Activated T-helper 1 cell treated with anti-CD3 and anti-CD28 coated beads, Interleukin-12 subunit alpha, Interleukin-12 subunit beta, Interleukin-2, Interleukin-4 antibody, amounts not matched to agents 30 ng/mL and 10 ng/mL and 1 ng/mL, durations not matched to agents 14 hours and 24 hours and 36 hours (primary cell): ENCODE measurements at regions of chr19 and their contacts with region 1.

Region 1: GRCh38 chr19:45862564-45863334 is at the start of gene SYMPK:
- DNase-seq: peak; percentile 99
- H3K4me3 Mint-ChIP-seq: peak within 1 kb of the TSS; percentile 94
- H3K27ac Mint-ChIP-seq: peak within 1 kb of the TSS; percentile 95
- H3K4me1 Mint-ChIP-seq: peaks cover 29% of the 10 kb centered on the region
- H3K27me3 Mint-ChIP-seq: peaks cover 31% of the 10 kb centered on the region
- total RNA-seq, gene SYMPK: 118 and 120 TPM in 2 replicates

Region 2: GRCh38 chr19:45584332-45585157 is 278.2 kb before region 1 on chr19 and contains the start of gene OPA3:
- intact Hi-C with region 1: loop called (anchors 1 kb)
- DNase-seq: peak; percentile 98
- H3K4me3 Mint-ChIP-seq: peak within 1 kb of the TSS; percentile 95
- H3K27ac Mint-ChIP-seq: peak within 1 kb of the TSS; percentile 96
- H3K4me1 Mint-ChIP-seq: peaks cover 16% of the 10 kb centered on the region
- H3K27me3 Mint-ChIP-seq: no peaks in the 10 kb centered on the region
- total RNA-seq, gene OPA3: 12.1 and 16.2 TPM in 2 replicates

Region 3: DNA sequence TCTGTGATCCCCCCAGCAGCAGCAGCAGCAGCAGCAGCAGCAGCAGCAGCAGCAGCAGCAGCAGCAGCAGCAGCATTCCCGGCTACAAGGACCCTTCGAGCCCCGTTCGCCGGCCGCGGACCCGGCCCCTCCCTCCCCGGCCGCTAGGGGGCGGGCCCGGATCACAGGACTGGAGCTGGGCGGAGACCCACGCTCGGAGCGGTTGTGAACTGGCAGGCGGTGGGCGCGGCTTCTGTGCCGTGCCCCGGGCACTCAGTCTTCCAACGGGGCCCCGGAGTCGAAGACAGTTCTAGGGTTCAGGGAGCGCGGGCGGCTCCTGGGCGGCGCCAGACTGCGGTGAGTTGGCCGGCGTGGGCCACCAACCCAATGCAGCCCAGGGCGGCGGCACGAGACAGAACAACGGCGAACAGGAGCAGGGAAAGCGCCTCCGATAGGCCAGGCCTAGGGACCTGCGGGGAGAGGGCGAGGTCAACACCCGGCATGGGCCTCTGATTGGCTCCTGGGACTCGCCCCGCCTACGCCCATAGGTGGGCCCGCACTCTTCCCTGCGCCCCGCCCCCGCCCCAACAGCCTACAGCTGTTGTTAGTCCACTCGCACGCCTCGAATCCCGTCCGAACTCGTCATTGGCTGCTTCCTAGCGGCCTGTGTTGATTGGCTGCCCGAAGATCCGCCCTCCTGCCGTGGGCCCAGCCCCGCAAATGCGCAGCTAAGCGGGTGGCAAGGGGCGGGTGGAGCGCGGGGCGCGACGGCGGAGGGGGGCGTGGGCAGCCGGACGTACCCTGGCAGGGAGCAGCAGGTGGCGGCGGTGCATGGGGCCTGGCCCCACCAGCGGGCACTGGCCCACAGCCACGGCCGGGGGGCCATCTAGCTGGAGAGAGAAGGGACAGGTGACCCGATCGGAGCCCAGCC is 92.3 kb before region 1 on chr19:
- intact Hi-C with region 1: loop called (anchors 1 kb)
- DNase-seq: peak; percentile 85
- H3K4me3 Mint-ChIP-seq: peak overlapping the region; percentile 88
- H3K27ac Mint-ChIP-seq: no peak overlapping the region
- H3K4me1 Mint-ChIP-seq: peaks cover 9% of the 10 kb centered on the region
- H3K27me3 Mint-ChIP-seq: peaks cover 20% of the 10 kb centered on the region

Region 4: GRCh38 chr19:45876411-45877197 is 13.9 kb after region 1 on chr19:
- intact Hi-C with region 1: loop called (anchors 1 kb)
- DNase-seq: no peak
- H3K4me3 Mint-ChIP-seq: no peak overlapping the region
- H3K27ac Mint-ChIP-seq: peak overlapping the region; percentile 68
- H3K4me1 Mint-ChIP-seq: peaks cover 23% of the 10 kb centered on the region
- H3K27me3 Mint-ChIP-seq: peaks cover 12% of the 10 kb centered on the region

Region 5: DNA sequence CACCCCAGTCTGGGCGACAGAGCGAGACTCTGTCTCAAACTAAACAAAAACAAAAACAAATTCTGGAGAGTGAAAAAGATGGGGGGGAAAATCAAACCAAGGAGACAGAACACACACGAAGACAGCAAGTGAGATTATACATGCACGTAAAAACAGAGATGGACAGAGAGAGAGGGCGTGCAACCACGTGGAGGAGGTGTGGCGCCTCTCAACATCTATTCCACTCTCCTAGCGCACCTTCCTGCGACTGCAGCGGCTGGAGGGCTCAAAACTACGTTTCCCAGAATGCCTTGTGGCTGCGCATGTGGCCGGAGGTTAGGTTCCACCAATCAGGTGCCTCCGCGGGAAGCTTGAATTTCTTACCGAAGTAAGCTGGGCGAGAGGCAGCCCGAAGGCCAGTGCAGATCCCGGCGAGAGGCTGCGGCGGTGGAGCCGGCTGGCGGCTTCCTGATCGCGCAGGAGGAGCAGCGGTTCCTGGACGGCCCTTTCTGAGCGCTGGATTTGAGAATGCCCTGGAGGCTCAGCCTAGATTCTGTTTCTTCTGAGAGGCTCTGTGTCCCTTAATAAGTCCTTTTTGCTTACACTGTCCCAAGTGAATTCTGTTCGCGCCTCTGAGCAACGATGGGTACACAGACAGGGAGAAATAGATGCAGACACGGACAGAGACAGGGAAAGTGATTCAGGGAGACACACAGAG is 65.0 kb after region 1 on chr19:
- intact Hi-C with region 1: loop called (anchors 1 kb)
- DNase-seq: peak; percentile 86
- H3K4me3 Mint-ChIP-seq: peak overlapping the region; percentile 78
- H3K27ac Mint-ChIP-seq: no peak overlapping the region
- H3K4me1 Mint-ChIP-seq: peaks cover 19% of the 10 kb centered on the region
- H3K27me3 Mint-ChIP-seq: peaks cover 15% of the 10 kb centered on the region

Region 6: GRCh38 chr19:46049597-46049996 is 186.8 kb after region 1 on chr19:
- intact Hi-C with region 1: no loop called
- DNase-seq: no peak
- H3K4me3 Mint-ChIP-seq: no peak overlapping the region
- H3K27ac Mint-ChIP-seq: no peak overlapping the region
- H3K4me1 Mint-ChIP-seq: no peaks in the 10 kb centered on the region
- H3K27me3 Mint-ChIP-seq: peaks cover 42% of the 10 kb centered on the region

Region 7: GRCh38 chr19:46346821-46347571 is 484.2 kb after region 1 on chr19 and contains the start of gene PPP5C:
- intact Hi-C with region 1: loop called (anchors 5 kb)
- DNase-seq: peak; percentile 86
- H3K4me3 Mint-ChIP-seq: peak within 1 kb of the TSS; percentile 94
- H3K27ac Mint-ChIP-seq: peak within 1 kb of the TSS; percentile 93
- H3K4me1 Mint-ChIP-seq: peaks cover 48% of the 10 kb centered on the region
- H3K27me3 Mint-ChIP-seq: peaks cover 17% of the 10 kb centered on the region
- total RNA-seq, gene PPP5C: 160 and 173 TPM in 2 replicates